Activated naive CD4-positive, alpha-beta T cell treated with anti-CD3 and anti-CD28 coated beads for 36 hours (primary cell): ENCODE measurements at regions of chr4 and their contacts with region 1.

Region 1: DNA sequence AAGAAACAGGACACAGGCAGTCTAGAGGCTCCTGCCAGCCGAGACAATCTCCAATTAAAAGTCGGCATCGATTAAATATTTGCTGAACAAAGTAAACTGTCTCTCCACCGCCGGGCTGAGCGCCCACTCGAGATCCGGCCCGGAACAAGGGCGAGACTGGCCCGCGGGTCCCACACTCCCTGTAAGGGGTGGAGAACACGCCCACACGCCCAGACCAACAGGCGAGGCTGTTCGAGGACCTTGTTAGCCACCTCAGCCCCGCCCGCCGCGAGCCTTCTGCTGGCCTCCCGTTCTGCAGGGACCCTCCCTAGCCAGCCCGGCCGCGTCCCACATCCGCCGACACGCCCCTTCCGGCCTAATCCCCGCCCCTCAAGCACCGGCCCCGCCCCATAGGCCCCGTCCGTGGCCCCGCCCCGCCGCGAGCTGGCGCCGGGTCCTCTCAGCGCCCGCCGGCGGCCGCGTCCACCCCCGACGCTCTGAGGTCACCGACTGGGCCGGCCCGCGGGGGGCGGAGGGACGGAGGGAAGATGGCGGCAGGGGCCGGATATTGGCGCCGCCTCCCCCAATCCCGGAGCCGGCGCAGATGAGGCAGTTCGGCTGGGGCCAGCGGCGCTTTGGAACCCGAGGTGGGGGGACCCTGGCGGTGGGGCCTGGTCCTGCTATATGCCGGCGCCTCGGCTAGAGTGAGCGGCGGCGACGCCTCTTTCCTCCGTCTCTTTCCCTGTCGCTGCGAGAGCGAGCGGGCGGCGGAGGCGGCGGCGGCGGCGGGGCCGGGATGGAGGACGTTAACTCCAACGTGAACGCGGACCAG is at the start of gene SLAIN2:
- DNase-seq: peak; percentile 98
- H3K4me3 Mint-ChIP-seq: peak within 1 kb of the TSS; percentile 97
- H3K27ac Mint-ChIP-seq: peak within 1 kb of the TSS; percentile 97
- H3K4me1 Mint-ChIP-seq: peaks cover 62% of the 10 kb centered on the region
- H3K27me3 Mint-ChIP-seq: no peaks in the 10 kb centered on the region
- total RNA-seq, gene SLAIN2: 39.7 to 42.6 TPM

Region 2: GRCh38 chr4:47914220-47914925 is 426.8 kb before region 1 on chr4 and contains the start of gene NFXL1:
- CTCF ChIA-PET with region 1: no interaction called
- intact Hi-C with region 1: loop called (anchors 1 kb)
- DNase-seq: peak; percentile 97
- H3K4me3 Mint-ChIP-seq: peak within 1 kb of the TSS; percentile 90
- H3K27ac Mint-ChIP-seq: peak within 1 kb of the TSS; percentile 91
- H3K4me1 Mint-ChIP-seq: peaks cover 29% of the 10 kb centered on the region
- H3K27me3 Mint-ChIP-seq: no peaks in the 10 kb centered on the region
- total RNA-seq, gene NFXL1: 10.4 to 11.4 TPM

Region 3: GRCh38 chr4:48109413-48110263 is 231.5 kb before region 1 on chr4:
- CTCF ChIA-PET with region 1: interaction called, 5 read pairs
- intact Hi-C with region 1: loop called (anchors 5 kb)
- DNase-seq: no peak
- H3K4me3 Mint-ChIP-seq: no peak overlapping the region
- H3K27ac Mint-ChIP-seq: peak overlapping the region; percentile 75
- H3K4me1 Mint-ChIP-seq: peaks cover 63% of the 10 kb centered on the region
- H3K27me3 Mint-ChIP-seq: no peaks in the 10 kb centered on the region

Region 4: DNA sequence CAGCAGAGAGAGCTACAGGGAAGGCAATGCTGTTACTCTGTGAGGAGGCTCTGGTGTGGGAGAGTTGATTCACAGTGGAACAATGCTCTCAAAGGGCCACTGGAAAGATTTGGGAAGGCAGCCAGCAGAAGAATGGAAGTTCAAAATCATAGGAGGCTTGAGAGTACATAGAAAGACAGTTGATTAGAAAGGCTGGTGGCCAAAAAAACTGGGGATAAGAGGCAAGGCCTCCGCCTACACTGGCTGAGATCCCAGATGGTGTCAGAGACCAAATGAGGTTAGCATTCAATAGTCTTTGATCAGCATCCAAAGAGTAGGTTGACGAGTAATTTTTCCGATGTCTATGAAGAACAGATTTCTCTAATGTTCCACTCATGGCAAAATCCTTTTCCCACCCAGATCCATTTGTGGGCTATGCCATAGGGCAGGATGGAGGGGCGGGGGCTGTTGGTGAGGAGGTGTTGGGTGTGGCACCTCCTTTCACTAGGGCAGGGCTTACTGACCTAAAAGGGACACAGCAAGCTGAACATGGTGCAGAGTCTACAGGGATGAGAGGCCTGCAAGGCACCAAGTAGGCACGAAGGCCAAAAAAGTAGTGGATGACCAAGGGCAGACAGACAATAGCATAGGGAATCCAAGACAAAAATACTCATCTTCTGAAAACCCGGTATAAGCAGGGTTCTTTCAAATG is 86.6 kb before region 1 on chr4:
- CTCF ChIA-PET with region 1: no interaction called
- intact Hi-C with region 1: no loop called
- DNase-seq: no peak
- H3K4me3 Mint-ChIP-seq: no peak overlapping the region
- H3K27ac Mint-ChIP-seq: no peak overlapping the region
- H3K4me1 Mint-ChIP-seq: peaks cover 2% of the 10 kb centered on the region
- H3K27me3 Mint-ChIP-seq: no peaks in the 10 kb centered on the region

Region 5: GRCh38 chr4:48315728-48316630 is 25.2 kb before region 1 on chr4:
- CTCF ChIA-PET with region 1: interaction called, 4 read pairs
- intact Hi-C with region 1: loop called (anchors 1 kb)
- DNase-seq: peak; percentile 52
- H3K4me3 Mint-ChIP-seq: no peak overlapping the region
- H3K27ac Mint-ChIP-seq: no peak overlapping the region
- H3K4me1 Mint-ChIP-seq: peaks cover 3% of the 10 kb centered on the region
- H3K27me3 Mint-ChIP-seq: no peaks in the 10 kb centered on the region

Region 6: DNA sequence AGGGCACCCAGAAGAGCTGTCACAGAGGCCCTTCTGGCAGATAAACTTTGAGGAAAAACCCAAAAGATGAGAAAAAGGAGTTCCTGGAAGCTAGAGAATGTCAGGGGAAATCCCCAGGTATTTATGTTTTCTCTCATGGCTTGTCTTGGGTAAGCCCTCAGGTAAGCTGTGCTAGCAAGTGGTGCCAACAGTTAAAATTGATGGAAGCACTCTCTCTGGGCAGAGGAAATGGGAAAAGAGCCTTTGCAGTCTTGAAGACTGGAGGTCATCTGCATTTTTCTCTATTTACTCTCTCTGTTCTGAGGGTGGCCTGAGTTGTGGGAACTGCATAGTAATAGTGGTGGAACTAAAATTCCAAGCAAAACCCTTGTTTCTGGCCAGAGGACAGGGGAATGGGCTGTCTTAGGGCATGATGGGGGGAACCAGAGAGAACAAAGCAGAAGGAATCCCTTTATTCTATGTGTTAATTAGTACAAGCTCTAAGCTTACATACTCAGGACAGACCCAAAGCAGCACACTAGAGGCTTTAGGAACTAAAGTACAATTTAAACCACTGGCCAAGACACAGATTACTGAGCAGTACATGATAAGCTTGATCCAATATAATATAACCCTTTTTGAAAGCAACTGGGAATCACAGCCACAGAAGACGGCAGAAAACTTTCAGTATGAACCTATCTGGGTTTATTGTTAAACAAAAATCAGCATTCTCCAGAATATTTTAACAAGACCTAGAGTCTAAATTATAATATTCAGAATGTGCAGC is 88.7 kb after region 1 on chr4:
- CTCF ChIA-PET with region 1: interaction called, 4 read pairs
- intact Hi-C with region 1: loop called (anchors 1 kb)
- DNase-seq: peak; percentile 16
- H3K4me3 Mint-ChIP-seq: no peak overlapping the region
- H3K27ac Mint-ChIP-seq: no peak overlapping the region
- H3K4me1 Mint-ChIP-seq: peaks cover 49% of the 10 kb centered on the region
- H3K27me3 Mint-ChIP-seq: no peaks in the 10 kb centered on the region

Region 7: DNA sequence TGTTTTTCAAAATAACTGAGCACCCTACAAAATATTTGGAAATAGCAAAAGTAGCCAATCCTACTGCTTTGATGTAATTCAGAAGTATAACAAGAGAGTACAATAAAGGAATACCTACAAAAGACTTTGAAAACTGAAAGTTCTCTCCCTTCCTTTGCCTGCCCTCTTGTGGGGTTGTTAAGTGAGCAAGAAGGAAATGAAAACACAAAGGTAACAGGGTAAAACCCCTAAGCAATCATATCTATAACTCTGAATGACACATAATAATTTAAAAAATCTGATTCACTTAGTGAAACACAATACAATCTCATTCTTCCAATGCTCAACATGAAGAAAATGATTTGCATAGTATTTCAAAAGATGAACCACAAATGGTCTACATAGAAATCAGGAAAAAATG is 340.7 kb after region 1 on chr4:
- CTCF ChIA-PET with region 1: no interaction called
- intact Hi-C with region 1: loop called (anchors 5 kb)
- DNase-seq: peak; percentile 51
- H3K4me3 Mint-ChIP-seq: no peak overlapping the region
- H3K27ac Mint-ChIP-seq: peak overlapping the region; percentile 63
- H3K4me1 Mint-ChIP-seq: peaks cover 38% of the 10 kb centered on the region
- H3K27me3 Mint-ChIP-seq: no peaks in the 10 kb centered on the region

Region 8: GRCh38 chr4:48830706-48831531 is 489.7 kb after region 1 on chr4 and contains the start of gene OCIAD1:
- CTCF ChIA-PET with region 1: no interaction called
- intact Hi-C with region 1: loop called (anchors 1 kb)
- DNase-seq: peak; percentile 96
- H3K4me3 Mint-ChIP-seq: peak within 1 kb of the TSS; percentile 100
- H3K27ac Mint-ChIP-seq: peak within 1 kb of the TSS; percentile 100
- H3K4me1 Mint-ChIP-seq: peaks cover 23% of the 10 kb centered on the region
- H3K27me3 Mint-ChIP-seq: peaks cover 6% of the 10 kb centered on the region
- total RNA-seq, gene OCIAD1: 91.9 to 99.0 TPM